Upper lobe of right lung (tissue), 1 donor: ENCODE measurements at regions of chr7 and their contacts with region 1.

Region 1: GRCh38 chr7:111953611-111954010 is 252.6 kb downstream of the DOCK4 start:
- DNase-seq: no peak
- ATAC-seq: peak; percentile 63
- H3K4me3 ChIP-seq: no peak overlapping the region
- H3K27ac ChIP-seq: peak overlapping the region; percentile 73
- H3K4me1 ChIP-seq: peaks cover 34% of the 10 kb centered on the region
- H3K27me3 ChIP-seq: no peaks in the 10 kb centered on the region
- CTCF ChIP-seq: no peak

Region 2: DNA sequence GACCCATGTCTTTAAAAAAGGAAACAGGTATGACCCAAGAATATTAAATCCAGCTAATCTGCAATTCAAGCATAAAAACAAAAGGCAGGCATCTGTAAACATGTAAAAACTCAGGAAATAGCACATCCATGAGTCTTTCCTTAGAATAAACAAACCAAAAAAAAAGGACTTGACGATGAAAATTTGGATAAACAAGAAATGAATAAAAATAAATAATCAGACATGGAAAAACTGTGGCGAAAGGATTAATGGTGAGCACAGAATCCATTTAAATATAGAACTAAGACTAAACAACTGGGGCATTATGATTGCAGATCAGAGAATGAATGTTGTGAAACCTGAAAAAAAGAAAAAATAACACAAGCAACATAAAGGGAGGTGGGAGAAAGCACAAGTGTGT is 82.5 kb after region 1 on chr7:
- intact Hi-C with region 1: loop called (anchors 5 kb)
- DNase-seq: no peak
- ATAC-seq: no peak
- H3K4me3 ChIP-seq: no peak overlapping the region
- H3K27ac ChIP-seq: no peak overlapping the region
- H3K4me1 ChIP-seq: peaks cover 4% of the 10 kb centered on the region
- H3K27me3 ChIP-seq: no peaks in the 10 kb centered on the region
- CTCF ChIP-seq: no peak

Region 3: DNA sequence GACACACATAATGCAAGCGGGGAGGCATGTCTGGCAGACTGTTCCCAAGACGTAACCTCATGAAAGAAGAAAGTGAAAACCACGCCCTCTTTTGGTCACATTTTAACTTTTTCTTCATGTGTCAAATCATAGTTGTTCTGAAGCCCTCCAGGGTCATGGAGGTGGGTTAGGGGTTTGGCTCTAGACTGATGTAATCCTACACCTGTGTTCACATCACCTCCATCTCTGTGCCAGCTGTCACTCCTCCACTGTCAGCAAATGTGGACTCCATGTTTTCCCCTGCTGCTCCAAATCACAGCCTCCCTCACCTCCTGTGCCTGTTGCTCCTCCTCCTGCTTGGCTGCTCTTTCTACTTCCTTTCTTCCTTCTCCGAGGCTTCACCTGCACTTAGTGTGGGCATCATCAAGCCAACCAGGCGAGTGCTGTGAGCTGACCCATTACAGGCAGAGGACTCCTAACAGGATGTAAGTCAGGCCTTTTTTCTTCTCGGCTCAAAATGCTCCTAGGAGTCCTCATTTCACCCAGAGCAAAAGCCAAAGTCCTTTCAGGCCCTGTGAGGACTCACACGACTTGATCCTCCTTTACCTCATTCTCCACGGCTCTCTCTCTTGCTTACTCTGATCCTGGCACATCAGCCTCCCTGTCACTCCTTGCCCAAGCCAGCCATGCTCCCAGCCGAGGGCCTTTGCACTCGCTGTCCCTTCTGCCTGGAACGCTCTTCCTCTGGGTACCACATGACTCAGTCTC is 430.2 kb after region 1 on chr7:
- intact Hi-C with region 1: no loop called
- DNase-seq: no peak
- ATAC-seq: peak; percentile 55
- H3K4me3 ChIP-seq: no peak overlapping the region
- H3K27ac ChIP-seq: no peak overlapping the region
- H3K4me1 ChIP-seq: no peaks in the 10 kb centered on the region
- H3K27me3 ChIP-seq: no peaks in the 10 kb centered on the region
- CTCF ChIP-seq: peak; percentile 10